ENCODE measurements at regions of chr5 and their contacts with region 1.

Region 1: GRCh38 chr5:35003018-35003957 is 44.5 kb downstream of the AGXT2 start:
- DNase-seq: peak; percentile 78 to 82 (median 82)
- ATAC-seq: peak; percentile 96
- H3K4me3 ChIP-seq: no peak overlapping the region
- H3K27ac ChIP-seq: no peak overlapping the region
- H3K4me1 ChIP-seq: no peaks in the 10 kb centered on the region; a peak in 1 of 5 replicates
- H3K27me3 ChIP-seq: peaks cover 5 to 16% of the 10 kb centered on the region in 2 experiments; a peak in 3 of 5 replicates
- CTCF ChIP-seq: peak; percentile 85 to 96 (median 96)
- EP300 ChIP-seq: no peak
- POLR2A ChIP-seq: no peak
- RAD21 ChIP-seq: peak; percentile 66 to 77

Region 2: GRCh38 chr5:34609951-34610441 is 393.3 kb before region 1 on chr5:
- CTCF ChIA-PET with region 1: no interaction called
- POLR2A ChIA-PET with region 1: no interaction called
- in situ Hi-C with region 1: no loop called
- intact Hi-C with region 1: no loop called
- DNase-seq: no peak
- ATAC-seq: no peak
- H3K4me3 ChIP-seq: no peak overlapping the region
- H3K27ac ChIP-seq: no peak overlapping the region
- H3K4me1 ChIP-seq: peaks cover 0 to 6% of the 10 kb centered on the region in 2 experiments; a peak in 2 of 5 replicates
- H3K27me3 ChIP-seq: peaks cover 0 to 3% of the 10 kb centered on the region in 2 experiments; a peak in 1 of 5 replicates
- CTCF ChIP-seq: no peak
- EP300 ChIP-seq: no peak
- POLR2A ChIP-seq: no peak
- RAD21 ChIP-seq: no peak

Region 3: GRCh38 chr5:34957857-34958690 is 45.2 kb before region 1 on chr5:
- CTCF ChIA-PET with region 1: interaction called, 8 read pairs
- POLR2A ChIA-PET with region 1: no interaction called
- in situ Hi-C with region 1: no loop called
- intact Hi-C with region 1: loop called (anchors 1 kb)
- DNase-seq: peak; percentile 43 to 54 (median 46)
- ATAC-seq: peak; percentile 91
- H3K4me3 ChIP-seq: no peak overlapping the region
- H3K27ac ChIP-seq: no peak overlapping the region
- H3K4me1 ChIP-seq: no peaks in the 10 kb centered on the region
- H3K27me3 ChIP-seq: no peaks in the 10 kb centered on the region
- CTCF ChIP-seq: peak; percentile 50 to 77 (median 72); a peak in 5 of 6 replicates
- EP300 ChIP-seq: no peak
- POLR2A ChIP-seq: no peak
- RAD21 ChIP-seq: peak in 1 of 2 experiments; percentile 32; a peak in 2 of 4 replicates

Region 4: DNA sequence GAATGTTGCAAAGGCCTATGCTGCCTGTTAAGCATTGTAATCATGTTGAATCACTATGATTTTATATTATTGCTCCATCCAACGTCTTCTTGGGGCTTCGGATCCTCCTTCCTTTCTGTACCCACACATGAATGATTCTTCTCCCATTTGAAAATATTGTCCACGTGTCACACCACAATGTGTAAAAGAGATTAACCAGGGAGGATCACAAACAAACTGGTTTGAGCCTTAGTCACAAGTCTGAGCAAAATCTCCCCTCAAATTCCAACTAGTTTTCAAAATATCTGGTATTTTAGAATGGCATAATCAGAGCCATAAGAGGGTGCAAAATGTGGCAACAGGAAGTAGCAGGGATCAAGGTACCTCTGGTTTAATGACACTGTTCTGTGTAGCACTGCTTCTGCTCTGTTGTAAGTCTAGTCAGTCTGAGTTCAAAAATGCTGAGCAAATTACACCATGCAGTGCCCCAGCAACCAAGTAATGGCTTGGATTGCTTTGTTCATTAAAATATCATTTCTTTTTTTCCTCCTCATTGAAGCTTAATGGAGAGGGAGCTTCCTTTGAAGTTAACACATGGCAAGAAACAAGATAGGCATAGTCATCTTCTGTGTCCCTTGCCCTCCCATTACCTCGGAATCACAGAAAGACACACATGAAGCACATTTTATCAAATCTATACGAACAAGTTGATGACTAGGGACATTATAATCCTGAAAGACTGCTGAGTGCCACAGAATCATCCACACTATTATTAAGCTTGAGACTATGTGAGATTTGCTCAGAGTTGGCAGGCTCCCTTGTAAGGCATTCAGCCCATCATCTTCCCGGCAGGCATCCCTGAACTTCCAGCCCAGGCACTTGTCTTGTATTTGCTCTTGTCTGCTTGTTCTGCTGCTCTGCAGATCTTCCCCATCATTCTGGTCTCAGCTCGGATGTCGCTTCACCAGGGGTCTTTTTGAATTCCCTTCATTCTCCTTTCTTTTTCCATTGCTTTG is 329.0 kb after region 1 on chr5:
- CTCF ChIA-PET with region 1: no interaction called
- POLR2A ChIA-PET with region 1: no interaction called
- in situ Hi-C with region 1: no loop called
- intact Hi-C with region 1: no loop called
- DNase-seq: no peak
- ATAC-seq: no peak
- H3K4me3 ChIP-seq: no peak overlapping the region
- H3K27ac ChIP-seq: no peak overlapping the region
- H3K4me1 ChIP-seq: no peaks in the 10 kb centered on the region
- H3K27me3 ChIP-seq: no peaks in the 10 kb centered on the region
- CTCF ChIP-seq: no peak
- EP300 ChIP-seq: no peak
- POLR2A ChIP-seq: no peak
- RAD21 ChIP-seq: no peak

Measured in K562 (cell line).